ENCODE measurements at regions of chr2 and their contacts with region 1.

Region 1: GRCh38 chr2:159933727-159934049 is 128.7 kb downstream of the PLA2R1 start:
- DNase-seq: no peak
- H3K4me3 ChIP-seq: no peak overlapping the region
- H3K27ac ChIP-seq: no peak overlapping the region
- H3K4me1 ChIP-seq: no peaks in the 10 kb centered on the region
- H3K27me3 ChIP-seq: no peaks in the 10 kb centered on the region
- CTCF ChIP-seq: no peak

Region 2: DNA sequence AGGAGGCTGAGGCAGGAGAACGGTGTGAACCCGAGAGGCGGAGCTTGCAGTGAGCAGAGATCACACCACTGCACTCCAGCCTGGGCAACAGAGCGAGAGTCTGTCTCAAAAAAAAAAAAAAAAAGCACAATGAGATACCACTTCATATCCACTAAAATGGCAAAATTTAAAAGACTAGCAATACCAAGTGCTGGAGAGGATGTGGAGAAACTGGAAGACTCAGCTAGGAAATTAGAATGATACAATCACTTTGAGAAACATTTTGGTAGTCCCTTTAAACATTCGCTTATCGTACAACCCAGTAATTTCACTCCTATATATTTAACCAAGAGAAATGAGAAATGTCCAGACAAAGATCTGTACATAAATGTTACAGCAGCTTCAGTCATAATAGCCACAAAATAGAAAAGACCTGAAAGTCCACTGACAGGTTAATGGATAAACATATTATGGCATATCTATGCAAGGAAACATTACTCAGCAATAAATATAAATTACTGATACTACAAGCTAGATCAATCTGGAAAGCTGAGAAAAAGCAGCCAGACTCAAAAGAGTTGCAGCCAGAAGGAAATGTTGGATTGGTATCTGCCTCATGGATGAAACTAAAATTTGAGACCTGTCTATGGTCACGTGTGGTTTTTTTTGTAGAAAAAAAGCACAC is 687.2 kb before region 1 on chr2:
- CTCF ChIA-PET with region 1: no interaction called
- POLR2A ChIA-PET with region 1: interaction called, 12 read pairs
- intact Hi-C with region 1: no loop called
- DNase-seq: no peak
- H3K4me3 ChIP-seq: no peak overlapping the region
- H3K27ac ChIP-seq: no peak overlapping the region
- H3K4me1 ChIP-seq: no peaks in the 10 kb centered on the region
- H3K27me3 ChIP-seq: no peaks in the 10 kb centered on the region
- CTCF ChIP-seq: no peak